Activated CD8-positive, alpha-beta T cell treated with anti-CD3 and anti-CD28 coated beads, Interleukin-2, amount 10 ng/mL, durations not matched to agents 7 days and 5 days (primary cell): ENCODE measurements at regions of chr17 and their contacts with region 1.

Region 1: GRCh38 chr17:79045842-79046196 is 21.9 kb downstream of the C1QTNF1 start:
- DNase-seq: peak; percentile 73
- ATAC-seq: peak; percentile 78
- H3K4me3 Mint-ChIP-seq: no peak overlapping the region
- H3K27ac Mint-ChIP-seq: no peak overlapping the region
- H3K4me1 Mint-ChIP-seq: no peaks in the 10 kb centered on the region
- H3K27me3 Mint-ChIP-seq: no peaks in the 10 kb centered on the region

Region 2: GRCh38 chr17:78806451-78806850 is 239.4 kb before region 1 on chr17:
- CTCF ChIA-PET with region 1: no interaction called
- POLR2A ChIA-PET with region 1: no interaction called
- DNase-seq: peak; percentile 59
- ATAC-seq: peak; percentile 17
- H3K4me3 Mint-ChIP-seq: no peak overlapping the region
- H3K27ac Mint-ChIP-seq: peak overlapping the region; percentile 79
- H3K4me1 Mint-ChIP-seq: peaks cover 49% of the 10 kb centered on the region
- H3K27me3 Mint-ChIP-seq: no peaks in the 10 kb centered on the region

Region 3: GRCh38 chr17:78998311-78999055 is 47.3 kb before region 1 on chr17:
- CTCF ChIA-PET with region 1: no interaction called
- POLR2A ChIA-PET with region 1: no interaction called
- DNase-seq: no peak
- ATAC-seq: no peak
- H3K4me3 Mint-ChIP-seq: no peak overlapping the region
- H3K27ac Mint-ChIP-seq: no peak overlapping the region
- H3K4me1 Mint-ChIP-seq: peaks cover 6% of the 10 kb centered on the region
- H3K27me3 Mint-ChIP-seq: no peaks in the 10 kb centered on the region

Region 4: GRCh38 chr17:79019632-79020584 is 25.9 kb before region 1 on chr17:
- CTCF ChIA-PET with region 1: interaction called, 21 read pairs
- POLR2A ChIA-PET with region 1: no interaction called
- DNase-seq: peak; percentile 72
- ATAC-seq: peak; percentile 43
- H3K4me3 Mint-ChIP-seq: no peak overlapping the region
- H3K27ac Mint-ChIP-seq: no peak overlapping the region
- H3K4me1 Mint-ChIP-seq: peaks cover 7% of the 10 kb centered on the region
- H3K27me3 Mint-ChIP-seq: peaks cover 27% of the 10 kb centered on the region

Region 5: DNA sequence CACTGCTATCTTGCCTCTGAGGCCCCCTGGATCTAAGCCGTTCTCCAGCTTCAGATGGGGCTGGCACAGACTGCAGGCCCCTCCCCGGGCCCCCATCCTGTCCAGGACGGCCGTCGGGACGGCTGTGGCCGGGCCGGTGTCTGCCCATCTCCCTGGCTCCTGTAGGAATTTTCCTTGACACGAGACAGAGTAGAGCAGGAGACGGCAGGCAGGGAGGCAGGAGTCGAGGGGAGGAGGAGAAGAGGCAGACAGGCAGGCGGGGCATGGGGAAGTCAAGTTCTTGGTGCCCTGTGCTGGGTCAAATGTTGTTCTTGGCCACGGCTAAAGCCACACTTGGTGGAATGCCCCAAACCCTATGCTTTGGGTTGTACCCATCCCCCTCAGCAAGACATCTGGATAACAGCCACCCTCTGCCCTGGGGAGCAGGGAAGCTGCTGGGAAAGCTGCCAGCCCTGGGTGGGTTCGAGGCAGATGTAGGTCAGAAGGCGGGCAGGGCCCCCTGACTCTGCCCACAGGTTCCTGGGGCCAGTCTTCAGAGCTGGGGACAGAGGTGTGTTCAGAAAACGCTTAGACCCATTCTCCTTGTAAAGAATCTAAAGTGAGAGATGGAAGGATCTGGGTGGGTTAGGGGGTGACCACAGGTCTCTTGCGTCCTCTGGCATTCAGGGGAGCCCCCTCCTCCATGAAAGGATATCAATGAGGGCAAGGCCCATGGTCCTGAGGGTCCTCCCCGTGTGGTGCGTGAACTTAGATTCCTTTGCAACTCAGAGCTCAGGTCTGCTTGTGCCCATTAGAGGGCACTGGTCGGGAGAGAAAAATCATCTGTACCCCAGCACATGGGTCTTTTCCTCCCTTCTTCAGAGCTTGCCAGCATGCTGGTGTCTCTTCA is 17.6 kb before region 1 on chr17:
- CTCF ChIA-PET with region 1: interaction called, 14 read pairs
- POLR2A ChIA-PET with region 1: no interaction called
- DNase-seq: no peak
- ATAC-seq: no peak
- H3K4me3 Mint-ChIP-seq: no peak overlapping the region
- H3K27ac Mint-ChIP-seq: no peak overlapping the region
- H3K4me1 Mint-ChIP-seq: peaks cover 12% of the 10 kb centered on the region
- H3K27me3 Mint-ChIP-seq: peaks cover 24% of the 10 kb centered on the region

Region 6: GRCh38 chr17:79033732-79034501 is 11.9 kb before region 1 on chr17:
- CTCF ChIA-PET with region 1: interaction called, 14 read pairs
- POLR2A ChIA-PET with region 1: no interaction called
- DNase-seq: no peak
- ATAC-seq: no peak
- H3K4me3 Mint-ChIP-seq: no peak overlapping the region
- H3K27ac Mint-ChIP-seq: no peak overlapping the region
- H3K4me1 Mint-ChIP-seq: no peaks in the 10 kb centered on the region
- H3K27me3 Mint-ChIP-seq: peaks cover 2% of the 10 kb centered on the region

Region 7: GRCh38 chr17:79095345-79096055 is 49.7 kb after region 1 on chr17:
- CTCF ChIA-PET with region 1: no interaction called
- POLR2A ChIA-PET with region 1: no interaction called
- DNase-seq: no peak
- ATAC-seq: no peak
- H3K4me3 Mint-ChIP-seq: no peak overlapping the region
- H3K27ac Mint-ChIP-seq: no peak overlapping the region
- H3K4me1 Mint-ChIP-seq: peaks cover 11% of the 10 kb centered on the region
- H3K27me3 Mint-ChIP-seq: peaks cover 12% of the 10 kb centered on the region

Region 8: DNA sequence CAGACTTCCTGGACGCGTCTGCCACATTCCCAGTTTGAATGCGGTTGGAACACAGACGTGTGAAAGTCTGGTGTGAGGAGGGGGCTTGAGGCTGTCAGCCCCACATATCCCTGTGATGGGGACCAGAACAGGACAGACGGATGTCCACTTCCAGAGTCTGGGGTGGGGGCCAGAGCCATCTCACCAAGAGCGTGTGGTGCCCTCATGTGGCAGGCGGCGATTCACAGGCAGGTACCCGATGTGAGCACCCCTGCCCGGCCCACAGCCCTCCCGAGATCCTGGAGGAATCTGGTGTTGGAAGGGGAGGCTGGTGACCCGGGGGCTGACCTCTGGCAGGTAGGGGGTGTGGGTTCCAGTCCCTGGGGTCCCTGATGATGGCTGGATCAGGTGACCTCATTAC is 80.3 kb after region 1 on chr17:
- CTCF ChIA-PET with region 1: no interaction called
- POLR2A ChIA-PET with region 1: no interaction called
- DNase-seq: no peak
- ATAC-seq: no peak
- H3K4me3 Mint-ChIP-seq: no peak overlapping the region
- H3K27ac Mint-ChIP-seq: no peak overlapping the region
- H3K4me1 Mint-ChIP-seq: no peaks in the 10 kb centered on the region
- H3K27me3 Mint-ChIP-seq: no peaks in the 10 kb centered on the region

Region 9: DNA sequence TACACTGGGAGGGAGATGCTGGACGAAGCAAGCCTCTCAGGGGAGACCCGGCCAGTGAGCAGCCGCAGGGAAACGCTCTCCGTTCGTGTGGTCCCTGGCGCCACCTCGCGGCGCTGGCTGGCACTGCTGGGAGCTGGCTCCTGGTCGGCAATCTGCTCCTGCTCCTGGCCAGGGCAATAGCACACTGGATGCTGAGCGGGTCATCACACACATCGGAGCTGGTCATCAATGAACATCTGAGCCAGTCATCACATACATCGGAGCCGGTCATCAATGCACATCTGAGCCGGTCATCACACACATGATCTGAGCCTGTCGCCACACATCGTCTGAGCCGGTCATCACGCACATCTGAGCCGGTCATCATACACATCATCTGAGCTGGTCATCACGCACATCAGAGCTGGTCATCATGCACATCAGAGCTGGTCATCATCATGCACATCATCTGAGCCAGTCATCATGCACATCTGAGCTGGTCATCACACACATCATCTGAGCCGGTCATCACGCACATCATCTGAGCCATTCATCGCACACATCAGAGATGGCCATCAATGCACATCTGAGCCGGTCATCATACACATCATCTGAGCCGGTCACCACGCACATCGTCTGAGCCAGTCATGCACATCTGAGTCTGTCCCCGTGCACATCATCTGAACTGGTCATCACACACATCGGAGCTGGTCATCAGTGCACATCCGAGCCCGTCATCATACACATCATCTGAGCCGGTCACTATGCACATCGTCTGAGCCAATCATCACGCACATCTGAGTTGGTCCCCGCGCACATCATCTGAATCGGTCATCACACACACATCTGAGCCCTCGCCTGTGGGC is 347.8 kb after region 1 on chr17:
- CTCF ChIA-PET with region 1: interaction called, 11 read pairs
- POLR2A ChIA-PET with region 1: no interaction called
- DNase-seq: peak; percentile 71
- ATAC-seq: peak; percentile 68
- H3K4me3 Mint-ChIP-seq: no peak overlapping the region
- H3K27ac Mint-ChIP-seq: no peak overlapping the region
- H3K4me1 Mint-ChIP-seq: no peaks in the 10 kb centered on the region
- H3K27me3 Mint-ChIP-seq: peaks cover 10% of the 10 kb centered on the region